Activated CD4-positive, alpha-beta T cell treated with anti-CD3 and anti-CD28 coated beads, Interleukin-2, amount 10 ng/mL, durations not matched to agents 24 days and 14 days (primary cell): ENCODE measurements at regions of chr1 and their contacts with region 1.

Region 1: DNA sequence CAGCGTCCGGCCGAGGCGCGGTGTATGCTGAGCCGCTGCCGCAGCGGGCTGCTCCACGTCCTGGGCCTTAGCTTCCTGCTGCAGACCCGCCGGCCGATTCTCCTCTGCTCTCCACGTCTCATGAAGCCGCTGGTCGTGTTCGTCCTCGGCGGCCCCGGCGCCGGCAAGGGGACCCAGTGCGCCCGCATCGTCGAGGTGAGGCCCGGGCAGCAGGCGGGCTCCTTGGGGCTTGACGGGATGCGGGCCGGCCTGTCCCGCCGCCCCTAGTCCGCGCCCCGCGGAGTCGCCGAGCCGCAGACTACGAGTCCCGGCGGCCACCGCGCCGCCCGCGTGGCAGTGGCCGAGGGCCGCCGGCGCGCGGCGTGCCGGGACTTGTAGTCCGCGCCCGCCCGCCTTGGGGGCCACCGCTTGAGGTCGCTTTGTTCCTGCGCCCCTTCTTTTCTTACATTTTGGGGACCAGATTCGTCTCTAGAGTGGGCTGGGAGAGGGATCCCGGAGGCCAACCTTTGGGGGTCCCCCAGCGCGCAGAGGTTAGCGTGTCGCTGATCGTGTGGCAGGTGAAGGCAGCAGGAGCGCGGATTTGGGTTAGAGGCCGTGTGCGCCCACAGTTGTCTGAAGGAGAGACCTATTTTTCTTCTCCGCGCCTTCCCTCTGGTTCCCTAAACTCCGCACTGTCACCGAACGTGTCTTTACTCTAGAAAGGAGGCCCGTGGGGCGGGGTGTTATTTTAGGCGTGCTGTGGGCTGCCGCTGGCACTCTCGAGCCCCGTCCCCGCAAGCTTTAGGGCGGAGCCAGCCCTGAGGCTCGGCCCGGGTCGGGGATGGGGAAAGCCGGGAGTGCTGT is 553 bp downstream of the CMPK1 start:
- DNase-seq: peak; percentile 94
- H3K4me3 Mint-ChIP-seq: no peak overlapping the region
- H3K27ac Mint-ChIP-seq: peak overlapping the region; percentile 96
- H3K4me1 Mint-ChIP-seq: peaks cover 10% of the 10 kb centered on the region
- H3K27me3 Mint-ChIP-seq: no peaks in the 10 kb centered on the region

Region 2: DNA sequence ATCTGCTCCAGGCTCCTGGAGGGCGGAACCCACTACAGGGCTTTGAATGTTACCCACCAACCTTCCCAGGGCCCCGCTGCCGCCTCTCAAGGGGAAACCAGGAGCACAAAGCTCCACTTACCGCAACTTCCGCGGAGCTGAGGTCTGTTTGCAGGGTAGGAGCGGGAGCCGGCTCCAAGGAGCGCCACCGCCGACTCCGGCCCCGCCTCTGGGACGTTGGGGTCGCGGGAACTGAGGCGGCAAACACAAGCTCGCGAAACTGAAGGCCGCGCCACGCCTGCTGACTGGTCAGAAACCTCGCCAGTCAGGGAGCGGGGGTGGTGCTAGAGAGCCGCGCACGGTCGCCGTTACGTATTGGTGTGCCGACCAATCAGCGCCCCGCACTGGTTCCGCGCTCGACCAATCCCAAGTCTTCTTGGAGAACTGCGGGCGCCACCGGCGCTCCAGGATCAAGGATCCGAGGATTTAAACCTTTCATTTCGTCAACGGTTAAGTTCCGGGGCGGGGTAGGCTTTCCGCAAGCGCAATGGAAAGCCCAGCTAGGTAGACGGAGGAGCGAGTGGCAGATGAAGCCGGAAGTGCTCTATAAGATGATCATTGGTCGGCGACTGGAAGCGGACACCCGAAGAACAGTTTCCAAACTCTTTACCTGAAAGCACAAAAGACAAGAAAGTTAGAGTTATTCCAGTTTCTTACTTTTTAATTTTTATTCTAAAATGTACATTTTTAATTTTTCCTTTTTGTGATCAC is 20.1 kb before region 1 on chr1 and contains the start of gene STIL:
- intact Hi-C with region 1: loop called (anchors 1 kb)
- DNase-seq: peak; percentile 99
- H3K4me3 Mint-ChIP-seq: peak within 1 kb of the TSS; percentile 91
- H3K27ac Mint-ChIP-seq: peak within 1 kb of the TSS; percentile 86
- H3K4me1 Mint-ChIP-seq: peaks cover 21% of the 10 kb centered on the region
- H3K27me3 Mint-ChIP-seq: no peaks in the 10 kb centered on the region
- total RNA-seq, gene STIL: 25.1 and 28.0 TPM in 2 replicates

Region 3: GRCh38 chr1:47351305-47351704 is 17.2 kb after region 1 on chr1:
- intact Hi-C with region 1: loop called (anchors 2 kb)
- DNase-seq: no peak
- H3K4me3 Mint-ChIP-seq: peak overlapping the region; percentile 3
- H3K27ac Mint-ChIP-seq: peak overlapping the region; percentile 88
- H3K4me1 Mint-ChIP-seq: peaks cover 14% of the 10 kb centered on the region
- H3K27me3 Mint-ChIP-seq: no peaks in the 10 kb centered on the region